OCI-LY7 (cell line): ENCODE measurements at regions of chr5 and their contacts with region 1.

Region 1: DNA sequence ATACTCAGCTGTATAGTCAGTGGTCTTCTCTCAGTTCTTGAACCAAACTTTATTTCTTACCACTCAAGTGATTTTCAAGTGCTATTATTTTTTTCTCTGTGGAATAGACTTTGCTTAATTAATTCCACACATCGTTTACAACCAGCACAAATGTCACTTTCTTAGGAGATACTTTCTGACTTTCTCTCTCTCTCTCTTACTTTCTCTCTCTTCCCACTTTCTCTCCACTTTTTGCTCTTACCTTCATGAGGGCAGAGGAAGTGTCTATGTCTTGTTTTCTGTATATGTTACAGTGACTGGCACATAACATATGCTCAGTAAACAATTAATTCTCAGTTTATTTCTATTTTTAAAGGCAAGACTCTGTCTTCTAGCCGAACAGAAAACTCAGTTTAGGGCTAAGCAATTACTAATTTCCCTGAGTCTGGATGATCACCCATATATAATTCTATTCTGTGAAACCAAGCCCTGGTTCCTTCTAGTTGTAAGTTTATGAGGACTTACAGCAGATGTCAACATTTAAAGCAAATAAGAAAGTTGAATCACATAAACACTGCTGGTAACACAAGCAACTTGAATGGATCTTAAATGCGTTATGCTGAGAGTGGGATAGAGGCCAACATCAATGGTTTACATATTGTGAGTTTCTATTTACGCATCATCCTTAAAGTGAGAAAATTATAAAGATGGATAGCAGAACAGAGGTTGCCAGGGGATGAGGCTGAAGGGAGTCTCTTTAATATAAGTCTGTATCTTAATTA is 791.4 kb downstream of the MTRR start:
- DNase-seq: no peak
- H3K4me3 ChIP-seq: no peak overlapping the region
- H3K27ac ChIP-seq: no peak overlapping the region
- H3K4me1 ChIP-seq: no peaks in the 10 kb centered on the region
- CTCF ChIP-seq: no peak

Region 2: GRCh38 chr5:8176101-8176693 is 484.1 kb before region 1 on chr5:
- CTCF ChIA-PET with region 1: no interaction called
- POLR2A ChIA-PET with region 1: no interaction called
- intact Hi-C with region 1: no loop called
- DNase-seq: no peak
- H3K4me3 ChIP-seq: no peak overlapping the region
- H3K27ac ChIP-seq: no peak overlapping the region
- H3K4me1 ChIP-seq: no peaks in the 10 kb centered on the region
- CTCF ChIP-seq: no peak

Region 3: GRCh38 chr5:8329773-8330172 is 330.5 kb before region 1 on chr5:
- CTCF ChIA-PET with region 1: no interaction called
- POLR2A ChIA-PET with region 1: no interaction called
- intact Hi-C with region 1: no loop called
- DNase-seq: no peak
- H3K4me3 ChIP-seq: no peak overlapping the region
- H3K27ac ChIP-seq: no peak overlapping the region
- H3K4me1 ChIP-seq: no peaks in the 10 kb centered on the region
- CTCF ChIP-seq: no peak

Region 4: DNA sequence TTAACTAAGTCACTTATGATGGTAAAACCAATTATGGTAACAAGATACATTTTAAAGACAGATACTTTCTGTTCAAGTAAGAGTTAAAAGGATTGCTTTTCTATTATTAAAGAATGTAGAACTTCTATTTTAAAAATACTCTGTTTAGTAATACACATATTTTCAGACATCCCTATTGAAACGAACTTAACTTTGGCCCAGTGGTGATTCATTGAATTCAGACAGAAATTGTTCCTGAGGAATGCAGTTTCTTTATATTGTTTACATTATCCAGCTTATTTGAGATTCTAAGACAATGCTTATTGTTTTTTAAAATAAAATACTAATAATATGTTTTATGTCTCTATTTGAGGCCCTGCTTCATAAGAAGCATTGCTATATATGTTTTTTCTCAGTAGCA is 69.1 kb after region 1 on chr5:
- CTCF ChIA-PET with region 1: no interaction called
- POLR2A ChIA-PET with region 1: no interaction called
- intact Hi-C with region 1: loop called (anchors 10 kb)
- DNase-seq: no peak
- H3K4me3 ChIP-seq: no peak overlapping the region
- H3K27ac ChIP-seq: no peak overlapping the region
- H3K4me1 ChIP-seq: no peaks in the 10 kb centered on the region
- CTCF ChIP-seq: no peak